Gastrocnemius medialis (tissue), 4 donors: ENCODE measurements at regions of chr17 and their contacts with region 1.

Region 1: DNA sequence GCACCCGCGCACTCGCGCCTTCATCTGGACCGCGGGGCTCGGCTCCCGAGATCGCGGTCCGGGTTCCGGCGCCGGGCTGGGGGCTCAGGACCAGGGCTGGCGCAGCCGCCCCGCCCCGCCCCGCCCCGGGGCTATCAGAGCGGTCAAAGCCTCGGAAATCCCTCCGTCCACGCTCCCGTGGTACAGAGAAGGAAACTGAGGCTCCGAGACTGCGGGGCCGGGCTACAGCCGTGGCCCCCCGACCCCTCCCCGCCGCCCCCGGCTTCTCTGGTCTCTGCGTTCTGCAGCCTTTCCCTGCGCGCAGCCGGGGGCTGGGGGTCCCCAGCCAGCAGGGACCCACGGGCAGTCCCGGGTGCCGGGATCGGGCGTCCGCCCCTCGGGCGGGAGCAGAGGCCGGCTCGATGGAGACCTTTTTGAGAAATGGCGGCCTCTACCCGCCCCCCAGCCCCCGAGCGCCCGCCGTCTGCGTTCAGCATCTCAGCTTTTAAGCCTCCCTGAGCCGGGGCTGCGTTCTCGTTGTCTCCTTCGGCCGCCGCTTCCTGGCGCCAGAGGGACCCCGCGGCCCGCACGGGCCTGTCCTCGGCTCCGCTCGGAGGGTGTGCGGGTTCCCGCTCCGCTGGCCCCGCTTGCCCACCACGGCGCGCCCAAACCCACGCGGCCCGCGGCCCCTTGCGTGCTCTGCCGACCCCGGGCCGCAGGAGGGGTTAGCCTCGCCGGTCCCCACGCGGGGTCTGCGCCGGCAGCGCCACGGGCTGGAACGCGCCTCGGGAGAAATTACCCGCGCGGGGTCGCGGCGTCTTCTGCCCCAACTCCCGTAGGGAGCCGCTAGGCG is 1.5 kb upstream of the NPTX1 start:
- DNase-seq: peak in 1 of 2 donors; percentile 48
- ATAC-seq: peak; percentile 64 to 70
- H3K4me3 ChIP-seq: peak overlapping the region; percentile 40 to 61 (median 44)
- H3K27ac ChIP-seq: no peak overlapping the region
- H3K4me1 ChIP-seq: peaks cover 24 to 32% of the 10 kb centered on the region in 2 donors
- H3K27me3 ChIP-seq: peaks cover 78 to 94% (median 85%) of the 10 kb centered on the region in 3 donors
- CTCF ChIP-seq: peak; percentile 45 to 70 (median 61)
- POLR2A ChIP-seq: no peak

Region 2: DNA sequence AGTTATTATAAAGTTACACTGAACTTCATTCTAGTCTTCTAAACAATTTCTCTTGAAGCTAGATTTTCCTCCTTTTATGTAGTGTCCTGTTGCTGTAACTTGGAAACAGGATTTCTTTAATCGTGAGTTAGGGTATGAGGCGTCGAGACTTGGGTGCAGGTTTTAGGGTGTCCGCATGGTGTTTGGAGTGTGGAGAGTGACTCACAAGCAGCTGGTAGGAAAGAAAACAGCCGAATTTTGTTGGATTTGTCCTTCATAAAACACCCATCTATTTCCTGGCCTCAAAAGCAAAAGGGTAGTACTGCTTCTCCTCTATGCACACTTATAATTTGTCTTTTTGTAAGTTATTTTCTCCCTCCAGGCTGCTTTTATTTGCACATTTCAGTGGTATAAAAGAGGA is 68.4 kb after region 1 on chr17:
- in situ Hi-C with region 1: no loop called
- intact Hi-C with region 1: no loop called
- DNase-seq: no peak
- ATAC-seq: no peak
- H3K4me3 ChIP-seq: peak overlapping the region; percentile 72 to 98 (median 96)
- H3K27ac ChIP-seq: peak overlapping the region in 3 of 4 donors; percentile 25 to 86 (median 85)
- H3K4me1 ChIP-seq: peaks cover 25 to 40% of the 10 kb centered on the region in 2 donors
- H3K27me3 ChIP-seq: no peaks in the 10 kb centered on the region
- CTCF ChIP-seq: no peak
- POLR2A ChIP-seq: no peak

Region 3: GRCh38 chr17:80575057-80575875 is 97.4 kb after region 1 on chr17:
- in situ Hi-C with region 1: no loop called
- intact Hi-C with region 1: loop called (anchors 1 kb)
- DNase-seq: peak; percentile 35 to 68
- ATAC-seq: peak; percentile 75 to 96
- H3K4me3 ChIP-seq: no peak overlapping the region
- H3K27ac ChIP-seq: no peak overlapping the region
- H3K4me1 ChIP-seq: peaks cover 0 to 10% of the 10 kb centered on the region in 2 donors
- H3K27me3 ChIP-seq: no peaks in the 10 kb centered on the region
- CTCF ChIP-seq: peak; percentile 79 to 97 (median 92)
- POLR2A ChIP-seq: no peak

Region 4: DNA sequence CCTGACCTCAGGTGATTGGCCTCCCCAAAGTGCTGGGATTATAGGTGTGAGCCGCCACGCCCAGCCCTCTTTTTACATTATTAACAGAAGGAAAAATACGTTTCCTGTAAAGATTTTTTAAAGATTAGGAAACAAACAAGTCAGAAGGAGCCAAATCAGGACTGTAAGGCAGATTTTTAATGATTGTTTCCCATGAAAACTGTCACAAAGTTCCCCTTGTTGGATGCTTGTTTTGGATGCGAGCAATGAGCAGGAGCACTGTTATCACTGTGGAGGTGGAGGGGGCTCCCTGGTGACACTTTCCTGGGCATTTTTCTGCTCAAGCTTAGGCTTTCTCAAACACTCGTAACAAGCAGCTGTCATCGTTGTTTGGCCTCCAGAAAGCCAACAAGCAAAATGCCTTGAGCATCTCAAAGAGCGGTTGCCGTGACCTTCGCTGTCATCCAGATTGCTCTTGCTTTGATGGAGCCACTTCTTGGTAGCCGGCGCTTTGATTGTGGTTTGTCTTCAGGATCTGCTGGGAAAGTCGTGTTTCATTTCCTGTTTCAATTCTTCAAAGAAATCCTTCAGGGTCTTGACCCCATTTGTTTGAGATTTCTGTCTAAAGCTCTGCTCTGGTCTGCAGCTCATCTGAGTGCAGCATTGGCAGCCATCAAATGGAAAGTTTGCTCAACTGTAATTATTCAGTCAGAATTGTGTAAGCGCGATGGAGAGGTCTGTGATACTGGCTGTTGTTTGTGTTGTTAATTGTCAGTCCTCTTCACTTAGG is 195.5 kb after region 1 on chr17:
- in situ Hi-C with region 1: no loop called
- intact Hi-C with region 1: loop called (anchors 5 kb)
- DNase-seq: no peak
- ATAC-seq: no peak
- H3K4me3 ChIP-seq: no peak overlapping the region
- H3K27ac ChIP-seq: no peak overlapping the region
- H3K4me1 ChIP-seq: peaks cover 0 to 7% of the 10 kb centered on the region in 2 donors
- H3K27me3 ChIP-seq: no peaks in the 10 kb centered on the region
- CTCF ChIP-seq: no peak
- POLR2A ChIP-seq: no peak

Region 5: DNA sequence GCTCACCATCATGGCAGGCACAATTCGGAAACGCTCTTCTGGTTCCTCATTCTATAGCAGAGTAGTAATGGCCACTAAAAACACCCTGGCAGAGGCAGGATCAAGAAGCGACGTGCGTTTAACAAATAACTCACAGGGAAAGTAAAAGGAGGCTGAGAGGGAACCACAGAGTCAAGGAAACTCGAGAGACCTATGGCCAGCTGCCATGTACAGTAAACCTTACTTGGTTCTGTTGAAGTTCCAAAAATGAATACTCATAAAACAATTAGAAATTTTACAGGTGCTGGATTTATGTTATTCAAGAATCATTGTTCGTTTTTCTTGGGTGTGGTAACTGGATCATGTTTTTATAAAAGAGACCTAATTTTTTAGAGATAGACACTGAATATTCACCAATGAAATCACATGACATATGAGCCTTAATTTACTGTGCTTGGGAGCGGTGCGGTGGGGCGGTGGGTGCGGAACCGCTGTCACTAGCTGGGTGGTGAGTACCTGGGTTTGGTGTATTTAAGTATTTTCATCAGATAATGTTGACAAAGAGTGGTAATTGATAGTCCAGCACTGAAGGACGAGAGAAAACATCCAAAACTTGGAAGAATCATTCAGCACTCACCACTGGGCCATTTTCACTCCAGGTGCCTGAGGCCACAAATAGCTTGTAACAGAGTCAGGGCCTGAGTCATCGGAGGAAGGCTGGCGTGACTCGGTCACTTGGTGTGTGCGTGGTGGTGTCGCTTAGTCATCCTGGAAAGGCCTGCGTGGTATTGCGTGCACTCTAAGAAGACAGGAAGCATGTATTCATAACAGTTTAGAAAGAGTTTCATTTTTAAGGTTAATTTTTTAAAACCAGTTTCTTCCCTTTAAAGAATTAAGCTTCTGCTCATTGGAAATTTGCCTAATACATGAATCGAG is 378.3 kb after region 1 on chr17:
- in situ Hi-C with region 1: no loop called
- intact Hi-C with region 1: no loop called
- DNase-seq: peak; percentile 94 to 96
- ATAC-seq: peak; percentile 93 to 94
- H3K4me3 ChIP-seq: no peak overlapping the region
- H3K27ac ChIP-seq: peak overlapping the region; percentile 90 to 93 (median 91)
- H3K4me1 ChIP-seq: peaks cover 42 to 45% of the 10 kb centered on the region in 2 donors
- H3K27me3 ChIP-seq: no peaks in the 10 kb centered on the region
- CTCF ChIP-seq: no peak
- POLR2A ChIP-seq: peak; percentile 56 to 74

Region 6: GRCh38 chr17:80899402-80900268 is 421.8 kb after region 1 on chr17:
- in situ Hi-C with region 1: no loop called
- intact Hi-C with region 1: loop called (anchors 5 kb)
- DNase-seq: peak in 1 of 2 donors; percentile 43
- ATAC-seq: peak; percentile 22 to 73
- H3K4me3 ChIP-seq: no peak overlapping the region
- H3K27ac ChIP-seq: no peak overlapping the region
- H3K4me1 ChIP-seq: no peaks in the 10 kb centered on the region
- H3K27me3 ChIP-seq: no peaks in the 10 kb centered on the region
- CTCF ChIP-seq: peak; percentile 46 to 64 (median 52)
- POLR2A ChIP-seq: no peak